ENCODE measurements at regions of chr5 and their contacts with region 1.

Region 1: GRCh38 chr5:95870105-95870672 is 47.7 kb upstream of the GLRX start:
- DNase-seq: peak; percentile 20
- H3K4me3 Mint-ChIP-seq: peak overlapping the region; percentile 64
- H3K27ac Mint-ChIP-seq: peak overlapping the region; percentile 97
- H3K4me1 Mint-ChIP-seq: peaks cover 55% of the 10 kb centered on the region
- H3K27me3 Mint-ChIP-seq: no peaks in the 10 kb centered on the region

Region 2: DNA sequence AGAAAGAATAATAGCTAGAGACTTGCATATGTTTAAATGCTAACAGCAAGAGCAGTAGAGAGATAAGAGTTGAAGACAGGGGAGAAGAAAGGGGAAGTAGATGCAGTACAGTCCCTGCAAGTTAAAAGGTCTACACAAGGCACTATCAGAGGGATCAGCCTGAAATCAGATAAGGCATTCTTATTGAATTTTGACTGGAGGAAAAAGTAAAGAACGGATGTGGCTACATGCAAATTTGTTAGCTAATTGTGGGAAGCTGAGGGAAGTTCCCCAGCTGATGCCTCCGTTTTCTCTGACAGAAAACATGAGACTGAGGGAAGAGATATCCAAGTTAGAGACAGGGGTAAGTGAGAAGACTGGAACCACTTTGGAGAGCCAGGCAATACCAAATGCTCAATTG is 152.0 kb before region 1 on chr5:
- intact Hi-C with region 1: loop called (anchors 1 kb)
- DNase-seq: peak; percentile 18
- H3K4me3 Mint-ChIP-seq: no peak overlapping the region
- H3K27ac Mint-ChIP-seq: no peak overlapping the region
- H3K4me1 Mint-ChIP-seq: no peaks in the 10 kb centered on the region
- H3K27me3 Mint-ChIP-seq: peaks cover 28% of the 10 kb centered on the region

Region 3: GRCh38 chr5:95858661-95859326 is 11.4 kb before region 1 on chr5:
- intact Hi-C with region 1: loop called (anchors 1 kb)
- DNase-seq: peak; percentile 84
- H3K4me3 Mint-ChIP-seq: peak overlapping the region; percentile 47
- H3K27ac Mint-ChIP-seq: peak overlapping the region; percentile 66
- H3K4me1 Mint-ChIP-seq: peaks cover 58% of the 10 kb centered on the region
- H3K27me3 Mint-ChIP-seq: no peaks in the 10 kb centered on the region

Region 4: DNA sequence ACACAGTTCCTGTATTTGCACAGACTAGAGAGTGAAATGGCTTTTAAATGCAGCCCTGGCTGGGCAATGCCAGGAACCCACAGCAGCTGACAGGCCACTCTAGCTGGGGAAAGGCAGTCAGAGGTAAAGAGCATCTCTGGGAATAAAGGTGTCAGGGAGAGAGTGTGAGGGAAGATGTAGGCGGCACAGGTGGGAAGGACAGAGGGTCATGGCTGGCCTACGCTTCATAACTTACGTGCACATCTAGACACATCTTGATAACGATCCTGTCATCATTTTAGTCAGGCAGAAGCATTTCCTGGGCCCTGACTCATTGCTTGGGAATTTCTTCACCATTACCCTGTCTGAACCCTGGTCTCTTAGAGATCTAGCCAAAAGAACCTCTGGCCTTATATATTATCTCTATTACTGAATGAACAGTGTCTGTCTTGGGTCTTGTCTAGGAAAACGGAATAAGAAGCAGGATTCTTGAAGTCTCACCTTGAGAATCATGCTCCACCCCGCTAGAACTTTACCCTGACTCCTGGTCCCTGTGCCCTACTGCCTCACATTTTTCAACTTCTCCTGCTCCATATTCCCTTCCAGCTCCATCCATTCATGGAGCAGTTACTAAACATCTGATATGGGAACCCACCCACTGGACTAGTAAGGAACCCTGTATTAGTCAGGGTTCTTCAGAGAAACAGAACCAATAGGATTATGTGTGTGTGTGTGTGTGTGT is 197.9 kb after region 1 on chr5:
- intact Hi-C with region 1: loop called (anchors 2 kb)
- DNase-seq: no peak
- H3K4me3 Mint-ChIP-seq: no peak overlapping the region
- H3K27ac Mint-ChIP-seq: peak overlapping the region; percentile 79
- H3K4me1 Mint-ChIP-seq: peaks cover 68% of the 10 kb centered on the region
- H3K27me3 Mint-ChIP-seq: no peaks in the 10 kb centered on the region

Region 5: DNA sequence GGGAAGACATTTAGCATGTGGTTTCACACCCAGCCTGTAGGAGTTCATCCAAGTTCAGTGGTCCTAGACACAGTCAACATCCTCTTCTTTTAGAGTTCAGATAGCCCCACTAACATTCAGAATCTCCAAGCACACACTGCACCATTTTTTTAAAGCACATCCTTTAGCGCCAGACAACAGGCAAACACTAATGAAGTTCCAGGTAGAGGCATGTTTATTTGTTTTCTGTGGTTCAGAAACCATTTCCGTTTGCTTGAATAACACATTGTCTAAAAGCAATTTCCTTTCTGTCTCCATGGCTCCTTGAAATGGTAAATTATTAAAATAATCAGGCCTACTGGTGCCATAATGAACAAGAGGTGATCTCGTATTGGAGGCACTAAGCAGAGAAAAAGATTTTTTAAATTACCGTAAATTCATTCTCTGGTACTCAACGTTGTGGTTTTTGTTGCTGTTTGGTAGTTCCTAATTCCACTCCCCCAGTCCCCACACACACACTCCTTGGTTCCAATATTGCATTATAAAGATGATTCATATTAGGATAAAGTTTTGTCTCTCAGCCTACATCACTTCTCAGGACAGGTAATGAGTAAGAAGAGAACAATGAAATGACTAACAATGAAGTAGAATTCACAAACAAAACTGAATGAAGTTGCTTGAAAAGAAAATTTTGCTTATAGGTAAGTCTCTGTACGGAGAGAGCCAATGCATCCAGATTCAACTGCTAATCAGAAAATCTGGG is 409.8 kb after region 1 on chr5:
- intact Hi-C with region 1: loop called (anchors 1 kb)
- DNase-seq: peak; percentile 14
- H3K4me3 Mint-ChIP-seq: peak overlapping the region; percentile 27
- H3K27ac Mint-ChIP-seq: peak overlapping the region; percentile 56
- H3K4me1 Mint-ChIP-seq: peaks cover 40% of the 10 kb centered on the region
- H3K27me3 Mint-ChIP-seq: peaks cover 4% of the 10 kb centered on the region

Region 6: GRCh38 chr5:96662725-96663513 is 792.7 kb after region 1 on chr5:
- intact Hi-C with region 1: loop called (anchors 5 kb)
- DNase-seq: peak; percentile 82
- H3K4me3 Mint-ChIP-seq: peak overlapping the region; percentile 98
- H3K27ac Mint-ChIP-seq: peak overlapping the region; percentile 98
- H3K4me1 Mint-ChIP-seq: peaks cover 67% of the 10 kb centered on the region
- H3K27me3 Mint-ChIP-seq: peaks cover 11% of the 10 kb centered on the region

Region 7: DNA sequence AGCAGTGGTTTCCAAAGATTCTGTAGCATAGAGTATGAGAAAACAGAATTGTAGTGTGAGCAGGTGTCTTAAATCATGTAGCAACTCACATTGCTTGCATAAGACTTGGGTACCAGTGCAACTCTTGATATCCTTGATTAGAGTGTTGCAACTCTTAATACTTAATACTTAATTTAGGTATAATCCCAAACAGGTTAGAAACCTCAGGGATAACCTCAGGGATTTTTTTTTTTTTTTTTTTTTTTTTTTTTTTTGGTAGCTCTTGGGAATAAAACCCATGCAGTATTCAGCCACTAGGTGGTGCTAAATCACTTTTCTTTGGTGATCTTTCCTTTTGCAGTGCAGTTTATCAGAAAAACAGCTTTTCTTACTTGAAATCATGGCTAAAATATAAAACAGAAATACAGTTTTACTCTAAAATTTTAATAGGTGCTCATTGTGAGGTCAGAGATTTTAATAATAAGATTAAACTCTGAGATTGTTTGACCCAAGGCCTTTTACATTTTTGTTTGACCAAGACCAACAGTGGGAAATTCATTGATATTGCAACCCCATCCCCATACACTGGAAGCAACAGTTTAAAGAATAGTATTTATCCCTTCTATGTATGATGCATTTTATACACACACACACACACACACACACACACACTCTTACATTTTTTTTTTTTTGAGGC is 882.3 kb after region 1 on chr5:
- intact Hi-C with region 1: no loop called
- DNase-seq: no peak
- H3K4me3 Mint-ChIP-seq: no peak overlapping the region
- H3K27ac Mint-ChIP-seq: no peak overlapping the region
- H3K4me1 Mint-ChIP-seq: peaks cover 5% of the 10 kb centered on the region
- H3K27me3 Mint-ChIP-seq: no peaks in the 10 kb centered on the region

Measured in activated T-helper 1 cell treated with anti-CD3 and anti-CD28 coated beads, Interleukin-12 subunit alpha, Interleukin-12 subunit beta, Interleukin-2, Interleukin-4 antibody, amounts not matched to agents 30 ng/mL and 10 ng/mL and 1 ng/mL, durations not matched to agents 14 hours and 24 hours and 36 hours (primary cell).